HCT116 (cell line): ENCODE measurements at regions of chr2 and their contacts with region 1.

Region 1: GRCh38 chr2:112481050-112481527 is 867 bp upstream of the TTL start:
- DNase-seq: peak; percentile 67
- ATAC-seq: peak; percentile 81
- H3K4me3 ChIP-seq: peak overlapping the region; percentile 62
- H3K27ac ChIP-seq: peak overlapping the region; percentile 87
- H3K4me1 ChIP-seq: peaks cover 15 to 24% of the 10 kb centered on the region in 2 experiments; a peak in 3 of 4 replicates
- H3K27me3 ChIP-seq: no peaks in the 10 kb centered on the region
- CTCF ChIP-seq: peak; percentile 72 to 87 (median 79)
- POLR2A ChIP-seq: peak; percentile 6
- RAD21 ChIP-seq: peak; percentile 84

Region 2: GRCh38 chr2:112254466-112255239 is 226.4 kb before region 1 on chr2 and contains the start of gene ZC3H8:
- CTCF ChIA-PET with region 1: no interaction called
- POLR2A ChIA-PET with region 1: no interaction called
- RAD21 ChIA-PET with region 1: no interaction called
- intact Hi-C with region 1: loop called (anchors 5 kb)
- DNase-seq: peak; percentile 75
- ATAC-seq: peak; percentile 98
- H3K4me3 ChIP-seq: peak within 1 kb of the TSS; percentile 70 to 72
- H3K27ac ChIP-seq: peak within 1 kb of the TSS; percentile 67
- H3K4me1 ChIP-seq: peaks cover 0 to 20% of the 10 kb centered on the region in 2 experiments; a peak in 2 of 4 replicates
- H3K27me3 ChIP-seq: no peaks in the 10 kb centered on the region
- CTCF ChIP-seq: no peak
- POLR2A ChIP-seq: peak; percentile 83
- RAD21 ChIP-seq: no peak
- total RNA-seq, gene ZC3H8: 13.4 TPM

Region 3: DNA sequence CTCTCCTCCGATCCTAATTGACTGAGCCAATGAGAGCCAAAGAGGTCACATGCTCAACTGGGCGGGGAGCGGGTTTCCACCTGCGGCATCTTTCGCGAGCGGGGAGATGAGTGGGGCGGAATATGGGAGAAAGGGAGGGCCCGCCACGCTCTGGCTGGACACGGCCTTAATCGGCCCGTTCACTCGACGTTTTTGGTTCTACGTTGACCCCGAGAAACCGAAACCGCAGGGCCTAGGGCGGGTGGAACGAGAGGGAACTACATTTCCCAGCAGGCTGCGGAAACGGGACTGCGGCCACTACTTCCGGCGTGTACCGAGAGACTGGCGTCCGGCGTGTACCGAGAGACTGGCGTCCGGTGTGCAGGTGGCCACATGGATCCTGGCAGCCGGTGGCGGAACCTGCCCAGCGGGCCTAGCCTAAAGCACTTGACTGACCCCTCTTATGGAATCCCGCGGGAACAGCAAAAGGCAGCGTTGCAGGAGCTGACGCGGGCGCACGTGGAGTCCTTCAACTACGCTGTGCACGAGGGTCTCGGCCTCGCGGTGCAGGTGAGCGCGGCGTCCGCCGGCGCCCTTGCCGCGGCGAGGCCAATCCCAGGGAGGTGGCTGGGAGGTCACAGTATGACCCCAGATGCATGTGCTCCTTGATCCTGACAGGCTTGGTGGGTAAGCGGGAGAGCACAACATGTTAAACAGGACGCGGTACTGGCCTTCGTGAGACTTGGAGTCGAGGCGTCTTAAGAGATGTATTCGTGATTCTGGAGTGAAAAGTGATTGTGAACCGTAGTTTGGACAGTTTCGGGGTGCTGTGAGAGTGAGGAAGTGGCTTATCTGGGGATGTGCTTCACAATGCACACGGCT is 61.3 kb after region 1 on chr2 and contains the start of gene POLR1B:
- CTCF ChIA-PET with region 1: no interaction called
- POLR2A ChIA-PET with region 1: no interaction called
- RAD21 ChIA-PET with region 1: interaction called in 1 of 2 experiments, 3 read pairs
- intact Hi-C with region 1: loop called (anchors 5 kb)
- DNase-seq: peak; percentile 76
- ATAC-seq: peak; percentile 87
- H3K4me3 ChIP-seq: peak within 1 kb of the TSS; percentile 93
- H3K27ac ChIP-seq: peak within 1 kb of the TSS; percentile 65
- H3K4me1 ChIP-seq: peaks cover 5 to 15% of the 10 kb centered on the region in 2 experiments
- H3K27me3 ChIP-seq: no peaks in the 10 kb centered on the region
- CTCF ChIP-seq: no peak
- POLR2A ChIP-seq: peak; percentile 79
- RAD21 ChIP-seq: no peak
- total RNA-seq, gene POLR1B: 57.7 TPM

Region 4: DNA sequence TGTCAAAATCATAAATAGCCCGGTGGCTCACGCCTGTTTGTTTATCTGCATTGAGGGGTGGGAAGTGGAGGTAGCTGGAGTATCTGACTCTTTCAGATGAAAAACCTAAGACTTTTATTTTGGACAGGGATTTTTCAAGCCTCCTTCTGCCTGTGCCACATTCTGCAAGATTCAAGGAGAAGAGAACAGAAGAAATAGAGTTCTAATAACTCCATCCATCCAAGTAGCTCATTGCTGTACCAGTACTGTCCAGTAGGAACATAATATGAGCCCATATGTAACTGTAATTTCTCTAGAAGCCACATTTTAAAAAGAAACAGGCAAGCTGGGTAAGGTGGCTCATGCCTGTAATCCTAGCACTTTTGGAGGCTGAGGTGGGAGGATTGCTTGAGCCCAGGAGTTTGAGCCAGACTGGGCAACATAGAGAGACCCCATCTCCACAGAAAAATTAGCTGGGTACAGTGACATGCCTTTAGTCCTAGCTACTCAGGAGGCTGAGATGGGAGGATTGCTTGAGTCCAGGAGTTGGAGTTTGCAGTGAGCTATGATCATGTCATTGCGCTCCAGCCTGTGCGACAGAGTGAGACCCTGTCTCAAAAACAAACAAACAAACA is 204.3 kb after region 1 on chr2:
- CTCF ChIA-PET with region 1: no interaction called
- POLR2A ChIA-PET with region 1: no interaction called
- RAD21 ChIA-PET with region 1: no interaction called
- intact Hi-C with region 1: no loop called
- DNase-seq: no peak
- ATAC-seq: peak; percentile 68
- H3K4me3 ChIP-seq: no peak overlapping the region
- H3K27ac ChIP-seq: no peak overlapping the region
- H3K4me1 ChIP-seq: peaks cover 9 to 20% of the 10 kb centered on the region in 2 experiments
- H3K27me3 ChIP-seq: no peaks in the 10 kb centered on the region
- CTCF ChIP-seq: peak in 1 of 3 experiments; percentile 38; a peak in 3 of 6 replicates
- POLR2A ChIP-seq: no peak
- RAD21 ChIP-seq: no peak

Region 5: GRCh38 chr2:112737542-112738232 is 256.6 kb after region 1 on chr2:
- CTCF ChIA-PET with region 1: no interaction called
- POLR2A ChIA-PET with region 1: no interaction called
- RAD21 ChIA-PET with region 1: no interaction called
- intact Hi-C with region 1: no loop called
- DNase-seq: no peak
- ATAC-seq: no peak
- H3K4me3 ChIP-seq: peak overlapping the region in 1 of 2 experiments; percentile 5; a peak in 1 of 4 replicates
- H3K27ac ChIP-seq: no peak overlapping the region
- H3K4me1 ChIP-seq: peaks cover 15 to 23% of the 10 kb centered on the region in 2 experiments
- H3K27me3 ChIP-seq: no peaks in the 10 kb centered on the region
- CTCF ChIP-seq: no peak
- POLR2A ChIP-seq: no peak
- RAD21 ChIP-seq: no peak

Region 6: GRCh38 chr2:114068438-114068837 is 1587.3 kb after region 1 on chr2:
- CTCF ChIA-PET with region 1: no interaction called
- POLR2A ChIA-PET with region 1: no interaction called
- RAD21 ChIA-PET with region 1: no interaction called
- intact Hi-C with region 1: no loop called
- DNase-seq: no peak
- ATAC-seq: no peak
- H3K4me3 ChIP-seq: no peak overlapping the region
- H3K27ac ChIP-seq: no peak overlapping the region
- H3K4me1 ChIP-seq: no peaks in the 10 kb centered on the region
- H3K27me3 ChIP-seq: no peaks in the 10 kb centered on the region
- CTCF ChIP-seq: no peak
- POLR2A ChIP-seq: no peak
- RAD21 ChIP-seq: no peak